ENCODE measurements at regions of chr20 and their contacts with region 1.

Region 1: GRCh38 chr20:43537921-43538877 is 20.6 kb upstream of the SGK2 start:
- DNase-seq: peak; percentile 57
- CTCF ChIP-seq: peak; percentile 84

Region 2: GRCh38 chr20:43430265-43431133 is 107.7 kb before region 1 on chr20:
- CTCF ChIA-PET with region 1: no interaction called
- POLR2A ChIA-PET with region 1: no interaction called
- DNase-seq: no peak
- CTCF ChIP-seq: no peak

Region 3: DNA sequence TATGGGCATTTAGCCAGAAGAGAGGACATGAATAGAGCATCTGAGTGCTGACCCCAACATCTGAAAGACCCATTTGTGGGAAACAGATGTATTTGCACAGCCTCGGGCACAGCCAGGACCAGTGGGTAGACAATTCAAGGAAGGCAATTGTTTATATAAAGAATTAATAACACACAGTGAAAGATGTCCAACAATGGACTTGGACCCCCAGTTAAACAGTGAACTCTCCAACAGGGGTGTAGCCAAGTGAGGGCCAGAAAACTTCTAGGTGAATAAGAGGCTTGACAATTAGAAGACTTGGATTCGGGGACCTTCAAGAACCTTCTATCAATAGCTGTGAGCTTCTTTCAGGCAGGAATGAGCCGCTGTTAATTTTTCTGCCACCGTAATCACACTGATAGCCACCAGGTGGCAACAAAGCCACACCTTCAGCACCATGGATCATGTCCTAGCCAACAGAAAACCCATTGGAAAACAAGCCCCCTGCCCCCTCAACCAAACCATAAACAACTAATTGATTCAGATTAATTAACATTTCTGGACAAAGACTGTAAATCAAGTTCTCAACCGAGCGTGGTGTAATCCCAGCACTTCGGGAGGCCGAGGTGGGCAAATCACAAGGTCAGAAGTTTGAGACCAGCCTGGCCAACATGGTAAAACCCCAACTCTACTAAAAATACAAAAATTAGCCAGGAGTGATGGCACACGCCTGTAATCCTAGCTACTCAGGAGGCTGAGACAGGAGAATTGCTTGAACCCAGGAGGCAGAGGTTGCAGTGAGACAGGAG is 89.3 kb before region 1 on chr20:
- CTCF ChIA-PET with region 1: interaction called, 18 read pairs
- POLR2A ChIA-PET with region 1: no interaction called
- DNase-seq: peak; percentile 66
- CTCF ChIP-seq: peak; percentile 75

Region 4: GRCh38 chr20:43549416-43550065 is 11.3 kb after region 1 on chr20:
- CTCF ChIA-PET with region 1: interaction called, 16 read pairs
- POLR2A ChIA-PET with region 1: no interaction called
- DNase-seq: no peak
- CTCF ChIP-seq: no peak

Region 5: DNA sequence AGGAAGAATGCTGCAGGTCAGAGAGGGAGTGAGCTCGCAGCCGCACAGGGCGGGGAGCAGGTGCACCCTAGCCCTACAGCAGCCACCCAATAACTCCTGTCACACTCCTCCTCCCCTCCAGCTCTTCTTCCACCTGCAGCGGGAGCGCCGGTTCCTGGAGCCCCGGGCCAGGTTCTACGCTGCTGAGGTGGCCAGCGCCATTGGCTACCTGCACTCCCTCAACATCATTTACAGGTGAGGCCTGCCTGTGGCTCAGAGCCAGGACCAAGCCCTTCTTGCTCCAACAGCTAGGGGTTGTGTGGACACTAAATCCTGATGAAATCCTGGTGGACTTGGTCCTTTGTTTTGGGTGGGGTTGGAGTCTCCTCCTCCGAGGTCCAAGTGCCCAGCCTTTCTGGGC is 32.3 kb after region 1 on chr20:
- CTCF ChIA-PET with region 1: interaction called, 15 read pairs
- POLR2A ChIA-PET with region 1: no interaction called
- DNase-seq: no peak
- CTCF ChIP-seq: no peak

Region 6: GRCh38 chr20:43642548-43642947 is 104.3 kb after region 1 on chr20:
- CTCF ChIA-PET with region 1: no interaction called
- POLR2A ChIA-PET with region 1: no interaction called
- DNase-seq: no peak
- CTCF ChIP-seq: no peak

Region 7: DNA sequence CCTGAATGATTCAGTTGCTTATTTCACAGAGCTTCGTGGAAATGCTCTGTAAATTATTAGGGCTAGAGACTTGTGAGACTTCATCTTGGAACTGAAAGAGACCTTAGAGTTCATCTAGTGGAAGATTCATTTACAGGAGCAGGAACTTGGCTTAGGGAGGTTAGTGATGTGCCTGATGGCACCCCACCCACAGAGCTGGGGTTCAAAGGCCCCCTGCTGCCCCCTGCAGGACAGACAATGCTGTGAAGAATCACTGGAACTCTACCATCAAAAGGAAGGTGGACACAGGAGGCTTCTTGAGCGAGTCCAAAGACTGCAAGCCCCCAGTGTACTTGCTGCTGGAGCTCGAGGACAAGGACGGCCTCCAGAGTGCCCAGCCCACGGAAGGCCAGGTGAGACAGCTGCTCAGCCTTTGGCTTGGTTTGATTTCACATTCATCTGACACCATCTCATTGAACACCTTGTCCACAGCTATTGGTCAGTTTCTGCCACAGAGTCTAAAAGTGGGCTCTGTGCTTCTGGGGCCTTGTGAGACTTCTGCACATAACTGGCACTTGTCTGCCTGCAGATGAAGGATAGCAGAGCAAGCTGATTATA is 153.8 kb after region 1 on chr20:
- CTCF ChIA-PET with region 1: interaction called, 108 read pairs
- POLR2A ChIA-PET with region 1: no interaction called
- DNase-seq: peak; percentile 80
- CTCF ChIP-seq: peak; percentile 68

Region 8: DNA sequence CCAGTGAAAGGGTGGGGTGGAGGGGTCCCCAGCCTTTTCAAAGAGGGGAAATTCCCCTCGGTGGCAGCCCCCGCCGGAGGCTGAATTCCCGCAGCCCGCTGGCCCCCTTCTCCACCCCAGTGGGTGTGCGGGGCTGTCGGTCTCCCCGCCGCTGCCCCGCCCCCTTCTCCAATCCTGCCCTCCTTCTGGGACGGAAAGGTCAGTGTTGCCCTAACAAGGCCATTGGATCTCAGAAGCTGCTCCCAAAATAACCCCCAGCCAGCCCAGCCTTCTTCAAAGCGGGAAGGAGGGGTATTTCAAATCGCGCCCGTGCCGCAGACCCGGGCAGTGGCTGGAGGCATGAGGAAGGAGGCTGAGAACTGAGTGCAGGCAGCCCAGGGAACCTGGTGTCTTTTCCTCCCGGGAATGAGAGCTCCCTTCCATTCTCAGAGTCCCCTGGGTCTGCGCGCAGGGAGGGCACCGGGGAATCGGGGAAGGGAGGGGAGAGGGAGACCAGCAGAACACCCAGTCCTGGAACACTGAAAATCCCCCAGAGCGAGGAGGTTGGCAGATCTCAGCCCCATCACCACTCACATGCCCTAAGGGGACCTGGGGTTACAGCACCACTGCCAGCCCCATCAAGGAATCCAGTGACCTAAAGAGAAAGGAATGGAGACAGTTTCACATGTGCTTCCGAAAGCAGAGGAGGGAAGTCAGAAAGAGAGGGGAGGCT is 649.0 kb after region 1 on chr20 and contains the start of gene JPH2:
- CTCF ChIA-PET with region 1: interaction called, 11 read pairs
- POLR2A ChIA-PET with region 1: no interaction called
- DNase-seq: no peak
- CTCF ChIP-seq: no peak

Measured in GM10248 (cell line).